GM18951 (cell line): ENCODE measurements at regions of chr14 and their contacts with region 1.

Region 1: DNA sequence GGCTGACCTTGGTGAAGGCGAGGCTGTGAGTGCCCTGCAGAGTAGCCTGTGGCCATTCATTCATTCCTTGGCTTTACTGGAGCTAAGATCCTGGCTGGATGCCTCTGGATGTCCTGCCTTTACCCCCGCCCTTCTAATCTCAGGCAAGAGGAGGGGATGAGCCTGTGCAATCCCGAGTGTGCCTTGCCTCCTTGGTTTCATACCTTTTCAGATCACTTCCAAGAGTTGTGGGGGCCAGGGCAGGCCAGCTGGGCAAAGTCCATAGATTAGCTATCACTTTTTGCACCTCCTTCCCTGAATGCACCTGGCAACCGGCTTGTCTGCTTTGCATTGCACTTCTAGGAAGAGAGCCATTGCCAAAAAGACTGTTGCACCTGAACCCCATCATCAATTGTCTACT is 1.5 kb downstream of the VRTN start:
- POLR2A ChIP-seq: no peak

Region 2: GRCh38 chr14:74493343-74494261 is 143.8 kb after region 1 on chr14 and contains the start of gene ISCA2:
- in situ Hi-C with region 1: loop called (anchors 10 kb)
- POLR2A ChIP-seq: peak; percentile 83